Adrenal gland (tissue), 19 donors: ENCODE measurements at regions of chr4 and their contacts with region 1.

Region 1: GRCh38 chr4:77385124-77385969 is 220.3 kb upstream of the CXCL13 start:
- DNase-seq: peak; percentile 55 to 85 (median 69)
- H3K4me3 ChIP-seq: no peak overlapping the region
- H3K27ac ChIP-seq: no peak overlapping the region
- H3K4me1 ChIP-seq: no peaks in the 10 kb centered on the region
- H3K27me3 ChIP-seq: no peaks in the 10 kb centered on the region
- CTCF ChIP-seq: peak; percentile 75 to 92 (median 84)
- POLR2A ChIP-seq: no peak

Region 2: DNA sequence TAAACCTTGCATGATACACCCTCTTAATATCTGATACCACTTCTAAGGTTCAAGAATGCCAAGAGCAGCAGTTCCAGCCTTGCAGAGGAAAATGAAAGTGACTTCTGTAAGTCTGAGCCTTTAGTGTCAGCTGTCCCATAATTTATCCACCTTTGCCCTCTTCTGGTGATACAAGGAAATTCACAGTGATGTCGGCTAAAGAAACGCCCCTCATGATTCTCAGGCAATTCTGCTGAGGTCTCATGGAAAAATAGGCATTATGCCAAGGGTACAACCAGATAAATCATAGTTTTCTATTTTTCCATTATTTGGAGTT is 48.0 kb after region 1 on chr4:
- intact Hi-C with region 1: loop called in 1 of 2 experiments (anchors 5 kb)
- DNase-seq: peak in 4 of 7 donors; percentile 22 to 57 (median 33)
- H3K4me3 ChIP-seq: no peak overlapping the region
- H3K27ac ChIP-seq: peak overlapping the region in 2 of 5 donors; percentile 34 to 49
- H3K4me1 ChIP-seq: peaks cover 19 to 26% of the 10 kb centered on the region in 2 donors
- H3K27me3 ChIP-seq: no peaks in the 10 kb centered on the region
- CTCF ChIP-seq: peak; percentile 31 to 74 (median 52)
- POLR2A ChIP-seq: no peak

Region 3: DNA sequence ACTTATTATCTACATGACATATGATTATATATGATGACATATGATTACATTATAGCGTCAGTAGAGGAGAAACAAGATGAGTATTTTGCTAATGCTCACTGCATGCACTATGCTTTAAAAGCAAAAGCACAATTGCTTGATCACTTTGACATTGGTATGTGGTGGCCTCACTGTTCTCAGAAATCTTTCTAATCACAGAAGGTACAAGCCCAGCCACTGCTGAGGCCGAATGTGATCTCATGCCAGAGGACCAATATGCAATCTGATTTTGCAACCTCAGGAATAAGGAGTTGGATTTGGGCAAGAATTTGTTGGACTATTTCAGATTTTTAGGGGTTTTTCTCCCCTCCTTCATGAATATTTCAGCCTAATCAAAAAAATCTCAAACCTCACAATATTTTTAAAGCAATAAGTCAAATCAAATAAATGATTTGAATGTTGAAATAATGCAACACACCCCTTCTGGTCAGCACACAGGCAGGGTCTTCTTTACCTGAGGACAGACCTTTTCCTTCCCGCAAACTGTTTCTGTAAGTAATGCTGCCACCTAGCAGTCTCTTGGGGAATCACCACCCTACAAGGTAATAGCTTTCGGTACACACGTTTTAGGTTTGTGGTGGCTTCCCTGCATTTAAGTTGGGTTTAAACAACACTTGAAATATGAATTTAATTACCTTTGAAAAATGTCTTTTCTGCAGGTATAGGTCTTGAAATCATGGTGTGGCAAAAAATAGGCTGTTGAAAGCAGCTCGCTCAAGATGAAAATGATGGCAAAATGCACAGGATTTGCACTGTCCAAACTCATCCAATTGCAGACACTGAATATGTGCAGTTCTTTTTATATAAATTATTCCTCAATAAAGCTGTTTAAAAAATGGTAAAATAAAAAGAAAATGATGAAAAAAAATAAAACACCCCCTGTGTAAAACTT is 215.4 kb after region 1 on chr4:
- intact Hi-C with region 1: loop called in 1 of 2 experiments (anchors 5 kb)
- DNase-seq: peak in 6 of 7 donors; percentile 21 to 56 (median 32)
- H3K4me3 ChIP-seq: no peak overlapping the region
- H3K27ac ChIP-seq: no peak overlapping the region
- H3K4me1 ChIP-seq: no peaks in the 10 kb centered on the region
- H3K27me3 ChIP-seq: peaks cover 4% of the 10 kb centered on the region
- CTCF ChIP-seq: peak; percentile 62 to 82 (median 64)
- POLR2A ChIP-seq: no peak

Region 4: DNA sequence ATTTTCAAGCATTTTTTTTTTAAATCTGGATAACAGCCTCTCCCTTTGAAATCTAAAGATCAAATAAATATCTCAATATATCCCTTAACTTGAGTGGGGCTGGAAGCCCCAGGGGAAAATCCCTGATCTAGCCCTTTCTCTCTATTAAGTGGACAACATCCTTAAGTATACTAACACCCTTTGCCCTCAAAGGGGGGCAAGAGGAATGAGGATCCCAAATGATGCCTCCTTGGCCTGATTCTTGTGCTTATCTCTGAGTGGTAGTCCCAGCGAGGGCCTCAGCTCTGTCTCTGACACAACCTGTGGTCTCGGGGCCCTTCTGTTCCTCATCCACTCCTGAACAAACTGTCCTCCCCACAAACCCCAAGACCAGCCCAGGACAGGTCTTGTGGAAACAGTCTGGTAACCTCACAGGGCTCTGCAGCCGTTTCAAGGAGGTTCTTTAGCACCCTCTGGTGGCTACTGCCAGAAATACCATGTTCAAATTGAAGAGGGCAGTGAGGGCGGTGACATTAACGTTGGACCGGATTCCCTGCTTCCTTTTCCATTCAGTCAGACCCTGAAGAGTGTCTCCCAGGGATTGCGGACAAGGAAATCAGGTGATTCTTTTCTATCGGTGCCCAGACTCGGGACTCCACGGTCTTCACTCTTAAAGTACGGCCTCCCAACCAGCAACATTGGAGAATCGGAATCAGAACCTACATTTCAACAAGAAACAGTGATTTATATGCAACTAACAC is 233.2 kb after region 1 on chr4:
- intact Hi-C with region 1: loop called (anchors 5 to 10 kb)
- DNase-seq: peak; percentile 63 to 87 (median 72)
- H3K4me3 ChIP-seq: no peak overlapping the region
- H3K27ac ChIP-seq: no peak overlapping the region
- H3K4me1 ChIP-seq: no peaks in the 10 kb centered on the region
- H3K27me3 ChIP-seq: no peaks in the 10 kb centered on the region
- CTCF ChIP-seq: peak; percentile 63 to 79 (median 76)
- POLR2A ChIP-seq: no peak